ENCODE measurements at regions of chr17 and their contacts with region 1.

Region 1: DNA sequence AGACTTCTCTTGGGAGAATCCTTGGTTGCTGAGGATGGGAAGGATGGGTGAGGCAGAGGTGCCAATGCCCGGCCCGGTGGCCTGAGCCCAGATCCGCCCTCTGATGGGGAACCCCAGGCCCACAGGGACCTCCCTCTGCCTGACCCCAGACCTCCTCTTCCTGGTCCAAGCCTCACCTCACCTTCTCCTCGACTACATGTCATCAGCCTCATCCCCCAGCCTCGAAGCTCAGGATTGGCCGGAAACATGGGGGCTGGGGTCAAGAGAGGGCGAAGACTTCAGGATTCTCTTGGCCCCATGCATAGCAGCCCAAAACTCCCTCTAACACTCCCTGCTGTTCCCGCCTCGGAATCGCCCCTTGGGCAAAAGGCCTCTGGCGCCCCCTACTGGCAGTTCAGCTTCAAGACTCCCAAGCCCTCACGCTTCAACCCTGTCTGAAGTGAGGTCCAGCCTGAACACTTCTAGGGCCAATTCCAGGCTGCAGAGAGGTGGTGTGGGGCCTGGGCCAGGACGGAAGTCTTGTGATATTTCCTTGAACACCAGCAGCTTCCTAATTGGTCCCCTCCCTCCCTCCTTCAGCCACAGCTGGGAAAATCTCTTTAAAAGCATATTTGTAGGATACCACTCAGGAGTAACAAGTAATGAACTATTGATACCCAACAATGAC is 47.2 kb downstream of the ARHGAP27 start:
- DNase-seq: peak; percentile 89
- CTCF ChIP-seq: peak; percentile 96

Region 2: DNA sequence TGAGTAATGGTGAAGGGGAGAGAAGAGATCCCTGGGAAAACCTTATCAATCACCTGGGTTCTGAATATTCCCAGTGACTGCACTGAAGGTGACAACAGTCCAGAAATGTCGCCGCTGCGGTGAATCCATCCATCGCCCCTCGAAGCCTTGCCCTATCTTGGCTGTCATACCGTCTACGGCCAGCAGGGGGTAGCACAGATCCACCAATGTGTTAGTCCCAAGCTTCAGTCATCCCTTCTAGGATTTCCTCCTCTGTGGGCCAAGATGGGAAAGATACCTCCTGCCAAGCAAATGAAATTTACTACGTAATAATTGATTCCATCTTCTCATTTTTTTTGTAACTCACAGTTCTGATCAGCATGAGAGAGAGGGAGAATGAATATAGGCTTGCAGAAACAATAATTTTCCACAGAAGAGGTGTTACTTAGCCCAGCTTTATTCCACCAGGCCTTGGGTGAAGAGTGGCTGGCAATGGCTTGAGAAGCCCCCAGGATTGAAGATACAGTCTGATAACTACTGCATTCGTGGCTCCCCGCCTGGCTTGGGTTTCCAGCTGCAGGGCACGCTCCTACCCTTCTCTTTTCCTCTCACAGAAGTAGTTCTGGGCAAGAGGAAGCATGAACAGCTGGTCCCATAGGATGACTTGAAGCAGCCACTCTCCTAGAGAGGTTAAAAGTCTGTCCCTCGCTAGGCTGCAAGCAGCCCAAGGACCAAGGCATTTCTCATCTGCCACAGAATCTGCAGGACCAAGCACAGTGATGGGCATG is 166.4 kb before region 1 on chr17:
- CTCF ChIA-PET with region 1: interaction called, 49 read pairs
- POLR2A ChIA-PET with region 1: no interaction called
- DNase-seq: peak; percentile 74
- CTCF ChIP-seq: peak; percentile 94

Region 3: DNA sequence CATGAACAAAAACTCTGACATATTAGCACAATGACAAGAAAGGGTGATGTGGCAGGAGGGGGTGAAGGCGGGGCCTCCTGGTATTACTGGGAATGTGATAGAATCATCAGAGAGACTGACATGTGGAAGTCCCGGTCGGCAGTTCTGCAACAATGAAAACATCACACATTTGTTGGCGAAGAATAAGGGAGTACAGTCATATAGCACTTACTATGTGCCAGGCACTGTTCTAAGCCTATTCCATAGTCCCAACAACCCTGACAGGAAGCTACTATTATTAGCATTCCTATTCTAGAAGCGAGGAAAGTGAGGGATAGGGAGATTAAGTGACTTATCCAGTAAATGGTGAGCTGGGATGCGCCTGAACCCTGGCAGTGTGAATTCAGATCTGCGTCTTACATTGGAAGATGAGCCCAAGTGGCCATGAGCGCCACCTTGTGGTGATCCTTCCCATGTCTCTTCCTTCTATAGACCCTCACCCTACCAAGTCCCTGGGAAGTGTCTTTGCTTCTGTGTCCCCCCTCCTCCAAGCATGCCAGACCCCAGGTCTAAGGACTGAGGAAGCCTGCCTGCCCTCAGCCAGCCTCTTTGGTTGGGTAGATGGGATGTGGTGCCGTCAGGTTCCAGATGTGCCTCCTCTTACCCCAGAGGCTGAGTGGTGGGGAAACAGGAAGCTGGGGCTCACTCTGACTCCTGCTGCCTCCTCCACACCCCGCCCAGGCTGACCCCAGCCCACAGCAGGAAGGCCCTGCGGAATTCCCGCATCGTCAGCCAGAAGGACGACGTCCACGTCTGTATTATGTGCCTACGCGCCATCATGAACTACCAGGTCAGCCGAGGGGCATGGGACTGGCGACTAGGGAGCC is 149.8 kb before region 1 on chr17:
- CTCF ChIA-PET with region 1: interaction called, 29 read pairs
- POLR2A ChIA-PET with region 1: no interaction called
- DNase-seq: peak; percentile 76
- CTCF ChIP-seq: peak; percentile 72

Region 4: GRCh38 chr17:45277216-45277849 is 108.1 kb before region 1 on chr17:
- CTCF ChIA-PET with region 1: interaction called, 497 read pairs
- POLR2A ChIA-PET with region 1: no interaction called
- DNase-seq: peak; percentile 86
- CTCF ChIP-seq: peak; percentile 82

Region 5: DNA sequence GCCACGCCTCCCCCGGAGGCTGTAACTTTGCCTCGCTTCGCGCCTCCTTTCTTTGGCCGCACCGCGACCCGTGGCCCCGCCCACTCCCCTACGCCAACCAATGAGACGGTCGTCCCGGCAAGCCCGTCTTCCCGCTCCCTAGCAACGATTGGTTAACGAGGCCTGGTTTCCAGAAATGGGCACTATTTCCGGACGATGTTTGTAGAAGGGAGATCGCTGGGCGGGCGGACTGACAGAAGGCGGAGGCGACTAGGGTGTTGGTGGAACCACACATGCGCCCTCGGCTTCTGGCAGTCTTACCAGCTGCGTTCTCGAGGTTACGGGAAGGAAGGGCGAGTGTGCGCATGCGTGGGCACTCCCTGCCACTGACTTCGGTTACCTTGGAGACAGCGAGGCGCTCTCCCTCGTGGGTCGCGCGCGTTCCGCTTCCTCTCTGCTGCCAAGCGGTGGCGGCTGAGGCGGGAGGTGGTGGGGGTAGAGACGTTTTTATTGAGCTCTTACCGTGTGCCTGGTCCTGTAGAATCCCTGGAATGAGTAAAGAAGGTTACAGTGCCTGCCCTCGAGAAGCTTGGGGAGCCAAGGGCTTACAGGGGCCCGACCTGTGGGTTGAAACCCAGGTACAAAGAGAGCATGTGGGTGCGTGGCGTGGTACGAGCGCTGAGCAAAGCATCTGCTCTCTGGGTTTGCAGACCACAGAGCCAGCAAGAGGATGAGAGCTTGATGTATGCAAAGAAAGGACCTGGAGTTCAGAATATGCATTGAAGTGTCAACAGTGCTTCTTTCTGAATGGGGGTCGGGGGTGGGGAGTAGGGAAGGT is 68.1 kb before region 1 on chr17:
- CTCF ChIA-PET with region 1: interaction called, 40 read pairs
- POLR2A ChIA-PET with region 1: no interaction called
- DNase-seq: peak; percentile 98
- CTCF ChIP-seq: no peak

Region 6: DNA sequence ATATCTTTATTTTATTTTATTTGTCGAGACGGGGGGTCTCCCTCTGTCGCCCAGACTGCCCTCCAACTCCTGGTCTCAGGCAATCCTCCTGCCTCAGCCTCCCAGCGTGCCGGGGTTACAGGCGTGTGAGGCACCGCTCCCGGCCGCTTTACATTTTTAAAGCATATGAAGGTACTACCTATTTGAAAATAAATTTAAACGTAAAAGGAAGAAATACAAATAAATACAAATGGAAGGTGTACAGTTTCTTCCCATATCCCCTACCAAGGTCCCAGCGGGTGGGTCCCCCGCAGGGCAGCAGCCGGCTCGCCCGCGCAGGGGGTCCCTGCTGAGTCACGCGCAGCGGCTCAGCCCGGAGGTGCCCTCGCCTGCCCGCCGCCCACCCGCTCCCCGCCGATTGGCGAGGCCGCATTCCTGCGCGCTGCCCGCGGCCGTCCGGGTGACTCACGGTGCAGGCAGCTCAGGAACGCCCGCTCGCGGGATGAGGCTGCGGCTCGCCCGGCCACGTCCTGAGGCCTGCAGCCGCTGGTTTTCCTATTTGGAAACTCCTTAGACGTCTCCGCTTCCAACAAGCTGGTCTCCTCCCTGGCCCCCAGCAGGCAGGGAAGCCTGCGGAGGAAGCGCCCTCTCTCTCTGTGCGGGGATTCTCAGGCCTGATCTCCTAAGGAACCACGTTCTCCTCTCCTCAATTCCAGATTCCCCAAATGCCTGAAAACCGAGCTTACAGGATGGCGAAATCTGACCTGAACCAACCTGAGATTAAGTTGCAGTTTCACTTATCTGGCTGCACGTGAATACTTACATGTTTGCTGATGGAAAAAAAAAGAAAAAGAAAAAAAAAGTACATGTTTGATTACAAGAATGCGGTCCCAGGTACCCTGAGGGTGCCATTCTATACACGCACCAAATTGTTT is 13.8 kb before region 1 on chr17:
- CTCF ChIA-PET with region 1: interaction called, 63 read pairs
- POLR2A ChIA-PET with region 1: no interaction called
- DNase-seq: no peak
- CTCF ChIP-seq: no peak

Region 7: DNA sequence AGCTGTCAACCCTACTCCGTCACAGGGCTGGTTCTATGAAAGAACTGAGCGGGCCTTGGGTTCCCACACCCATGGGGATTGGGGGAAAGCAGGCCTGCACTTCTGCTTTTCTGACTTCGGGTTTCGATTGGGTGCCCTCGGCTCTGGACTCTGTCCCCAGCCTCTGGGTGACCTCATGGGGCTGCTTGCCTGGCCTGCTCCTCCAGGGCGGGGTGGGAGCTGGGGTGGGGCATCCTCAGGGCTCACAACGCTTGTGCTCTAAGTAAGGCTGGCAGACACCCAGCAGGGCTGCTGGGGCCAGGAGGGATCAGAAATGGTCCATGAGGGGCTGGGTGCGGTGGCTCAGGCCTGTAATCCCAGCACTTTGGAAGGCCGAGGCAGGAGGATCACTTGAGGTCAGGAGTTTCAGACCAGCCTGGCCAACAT is 28.0 kb after region 1 on chr17:
- CTCF ChIA-PET with region 1: no interaction called
- POLR2A ChIA-PET with region 1: no interaction called
- DNase-seq: peak; percentile 80
- CTCF ChIP-seq: no peak